ENCODE measurements at regions of chr14 and their contacts with region 1.

Region 1: GRCh38 chr14:70816525-70816924 is 7.2 kb upstream of the MAP3K9 start:
- DNase-seq: no peak
- ATAC-seq: no peak
- H3K4me3 Mint-ChIP-seq: no peak overlapping the region
- H3K27ac Mint-ChIP-seq: no peak overlapping the region
- H3K4me1 Mint-ChIP-seq: peaks cover 26% of the 10 kb centered on the region
- H3K27me3 Mint-ChIP-seq: peaks cover 14% of the 10 kb centered on the region
- CTCF ChIP-seq: no peak

Region 2: DNA sequence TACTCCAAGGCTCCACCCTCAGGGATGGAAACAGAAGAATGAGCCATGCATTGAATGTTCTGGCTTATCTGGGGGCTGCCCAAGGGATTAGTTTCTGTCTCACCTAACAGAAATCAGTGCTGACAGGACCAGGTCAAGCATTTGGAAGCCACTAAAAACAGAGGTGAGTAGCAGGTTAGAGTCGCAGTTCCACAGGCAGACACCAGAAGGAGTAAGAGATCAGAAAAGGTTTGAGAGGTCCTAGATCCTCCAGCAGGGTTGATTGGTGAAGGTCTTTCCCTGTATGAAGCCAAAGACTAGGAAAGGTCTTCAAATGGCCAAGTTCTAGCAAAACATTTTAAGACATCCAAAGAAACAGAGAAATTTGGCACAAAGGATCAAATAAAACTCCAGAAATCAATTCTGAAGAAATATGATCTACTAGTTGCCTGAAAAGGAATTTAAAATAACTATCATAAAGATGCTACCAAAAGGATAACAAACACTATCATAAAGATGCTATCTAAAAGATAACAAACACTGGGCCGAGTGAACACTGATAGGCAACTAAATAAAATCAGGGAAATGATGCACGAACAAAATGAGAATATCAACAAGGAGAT is 194.3 kb before region 1 on chr14:
- CTCF ChIA-PET with region 1: interaction called, 29 read pairs
- POLR2A ChIA-PET with region 1: interaction called, 4 read pairs
- intact Hi-C with region 1: loop called (anchors 1 kb)
- DNase-seq: no peak
- ATAC-seq: peak; percentile 95
- H3K4me3 Mint-ChIP-seq: no peak overlapping the region
- H3K27ac Mint-ChIP-seq: no peak overlapping the region
- H3K4me1 Mint-ChIP-seq: peaks cover 19% of the 10 kb centered on the region
- H3K27me3 Mint-ChIP-seq: no peaks in the 10 kb centered on the region
- CTCF ChIP-seq: peak; percentile 74

Region 3: DNA sequence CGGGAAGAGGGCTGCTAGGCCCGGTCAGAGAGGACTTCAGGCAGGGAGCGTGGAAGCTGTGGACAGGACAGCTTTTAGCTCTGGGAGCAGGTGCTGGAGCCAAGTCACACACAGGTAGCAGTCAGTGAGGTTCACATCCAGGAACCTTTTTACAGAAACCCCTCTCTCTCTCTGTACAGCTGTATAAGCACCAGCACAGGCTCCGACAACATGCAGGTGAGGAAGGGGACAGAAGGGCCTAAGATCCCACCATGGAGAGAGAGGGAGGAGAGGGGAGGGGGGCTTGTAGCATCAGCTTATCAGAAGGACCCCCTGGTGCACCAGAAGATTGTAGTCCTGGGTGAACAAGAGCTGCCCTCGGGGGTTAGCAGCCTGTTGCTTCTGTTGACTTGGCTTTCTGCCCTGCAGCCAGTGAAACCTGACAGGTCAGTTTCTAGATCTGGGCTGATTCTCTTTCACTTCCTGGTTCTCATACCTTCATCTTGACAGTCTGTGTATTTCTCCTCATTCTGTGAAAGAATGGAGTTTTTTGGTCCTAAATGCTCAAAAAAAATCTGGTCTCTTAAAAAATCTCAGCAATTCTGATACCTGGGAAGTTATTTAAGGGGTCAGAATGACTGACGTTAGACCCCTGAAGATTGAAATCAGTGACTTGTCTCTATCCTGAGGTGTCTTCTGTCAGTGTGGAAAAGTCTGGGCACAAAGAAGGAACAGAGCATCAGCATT is 151.2 kb before region 1 on chr14:
- CTCF ChIA-PET with region 1: interaction called, 10 read pairs
- POLR2A ChIA-PET with region 1: no interaction called
- intact Hi-C with region 1: no loop called
- DNase-seq: peak; percentile 40
- ATAC-seq: peak; percentile 62
- H3K4me3 Mint-ChIP-seq: peak overlapping the region; percentile 66
- H3K27ac Mint-ChIP-seq: peak overlapping the region; percentile 93
- H3K4me1 Mint-ChIP-seq: peaks cover 97% of the 10 kb centered on the region
- H3K27me3 Mint-ChIP-seq: no peaks in the 10 kb centered on the region
- CTCF ChIP-seq: no peak

Region 4: GRCh38 chr14:70754989-70755388 is 61.5 kb before region 1 on chr14:
- CTCF ChIA-PET with region 1: interaction called, 4 read pairs
- POLR2A ChIA-PET with region 1: no interaction called
- intact Hi-C with region 1: loop called (anchors 5 kb)
- DNase-seq: no peak
- ATAC-seq: no peak
- H3K4me3 Mint-ChIP-seq: no peak overlapping the region
- H3K27ac Mint-ChIP-seq: no peak overlapping the region
- H3K4me1 Mint-ChIP-seq: no peaks in the 10 kb centered on the region
- H3K27me3 Mint-ChIP-seq: no peaks in the 10 kb centered on the region
- CTCF ChIP-seq: no peak

Region 5: DNA sequence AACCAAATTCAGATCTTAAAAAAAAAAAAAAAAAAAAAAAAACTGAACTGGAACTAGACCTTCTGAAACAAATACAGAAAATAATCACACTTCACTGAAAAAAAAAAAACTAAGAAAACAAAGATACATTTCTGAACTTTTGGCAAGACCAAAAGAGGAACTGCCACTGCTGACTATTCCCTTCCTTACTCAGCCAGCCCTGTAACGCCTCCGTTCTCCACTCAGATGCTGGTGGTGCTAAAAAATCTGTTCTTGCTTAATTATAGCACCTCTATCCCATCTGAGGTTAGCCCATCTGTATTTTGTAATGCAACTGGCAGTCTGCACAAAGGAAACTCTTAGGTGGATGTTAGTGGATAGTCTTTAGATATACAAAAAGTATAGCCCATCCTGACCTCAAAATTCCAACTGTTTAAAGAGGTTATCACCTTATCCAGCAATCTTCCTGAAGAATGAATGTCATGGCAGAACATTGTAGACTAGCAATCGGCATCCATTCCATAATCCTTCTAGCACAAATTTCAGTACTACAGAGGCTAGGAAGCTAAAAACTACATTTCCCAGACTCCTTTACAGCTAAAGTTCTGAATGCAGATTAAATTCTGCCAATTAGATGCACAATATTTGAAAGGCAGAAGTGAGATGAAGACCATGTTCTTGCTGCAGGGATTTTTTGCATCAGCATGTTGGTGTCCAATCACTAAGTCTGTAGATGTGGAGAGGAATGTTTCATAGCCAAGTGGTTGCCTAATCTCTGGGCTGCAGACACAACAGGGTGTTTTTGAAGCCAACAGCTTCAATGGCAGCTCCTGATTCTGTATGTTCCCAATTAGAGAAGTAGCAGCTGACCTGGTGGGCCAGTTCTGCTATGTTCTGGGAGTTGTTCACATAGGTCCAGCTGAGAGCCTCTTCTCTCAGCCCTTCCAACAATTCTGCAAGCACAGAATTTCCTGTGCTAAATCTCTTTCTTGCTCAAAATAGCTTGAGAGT is 12.9 kb before region 1 on chr14:
- CTCF ChIA-PET with region 1: interaction called, 14 read pairs
- POLR2A ChIA-PET with region 1: interaction called, 10 read pairs
- intact Hi-C with region 1: loop called (anchors 1 kb)
- DNase-seq: no peak
- ATAC-seq: peak; percentile 79
- H3K4me3 Mint-ChIP-seq: peak overlapping the region; percentile 35
- H3K27ac Mint-ChIP-seq: peak overlapping the region; percentile 86
- H3K4me1 Mint-ChIP-seq: peaks cover 49% of the 10 kb centered on the region
- H3K27me3 Mint-ChIP-seq: no peaks in the 10 kb centered on the region
- CTCF ChIP-seq: no peak

Region 6: DNA sequence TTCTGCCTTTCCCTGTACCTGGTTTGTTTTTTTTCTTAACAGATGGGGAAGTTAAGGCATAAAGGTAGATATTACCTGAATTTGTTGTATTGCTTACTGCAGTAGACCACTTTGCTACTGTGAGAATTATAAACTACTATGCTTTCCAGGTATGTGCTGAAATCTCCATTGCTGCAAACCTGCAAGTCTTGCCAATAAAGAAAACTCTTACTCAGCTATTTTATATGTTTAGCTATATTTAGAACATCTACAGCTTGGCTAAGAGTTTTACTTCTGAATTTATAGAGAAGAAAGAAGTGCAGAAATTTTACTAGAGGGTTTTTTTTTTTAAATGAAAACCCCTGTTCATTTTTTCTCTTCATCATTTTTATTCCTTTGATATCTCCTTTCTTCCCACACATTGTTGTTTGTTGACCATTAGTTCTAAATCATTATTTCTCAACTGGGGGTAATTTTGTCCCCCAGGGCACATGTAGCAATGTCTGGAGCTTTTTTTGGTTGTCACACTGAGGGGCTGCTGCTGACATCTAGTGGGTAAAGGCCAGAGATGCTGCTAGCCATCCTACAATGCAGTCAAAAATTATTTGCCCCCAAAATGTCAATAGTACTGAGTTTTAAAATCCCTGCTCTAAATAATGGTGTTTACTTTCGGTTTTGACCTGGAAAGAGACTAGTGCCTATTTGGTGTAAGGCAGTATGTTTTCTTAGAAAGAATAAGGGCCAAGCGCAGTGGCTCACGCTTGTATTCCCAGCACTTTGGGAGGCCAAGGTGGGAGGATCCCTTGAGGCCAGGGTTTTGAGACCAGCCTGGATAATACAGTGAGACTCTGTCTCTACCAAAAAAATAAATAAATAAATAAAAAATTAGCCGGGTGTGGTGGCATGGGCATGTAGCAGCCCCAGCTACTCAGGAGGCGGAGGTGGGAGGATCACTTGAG is 139.3 kb after region 1 on chr14:
- CTCF ChIA-PET with region 1: interaction called, 27 read pairs
- POLR2A ChIA-PET with region 1: interaction called, 6 read pairs
- intact Hi-C with region 1: loop called (anchors 1 kb)
- DNase-seq: no peak
- ATAC-seq: peak; percentile 52
- H3K4me3 Mint-ChIP-seq: no peak overlapping the region
- H3K27ac Mint-ChIP-seq: no peak overlapping the region
- H3K4me1 Mint-ChIP-seq: peaks cover 3% of the 10 kb centered on the region
- H3K27me3 Mint-ChIP-seq: no peaks in the 10 kb centered on the region
- CTCF ChIP-seq: no peak

Region 7: GRCh38 chr14:70972107-70972976 is 155.8 kb after region 1 on chr14:
- CTCF ChIA-PET with region 1: interaction called, 39 read pairs
- POLR2A ChIA-PET with region 1: interaction called, 4 read pairs
- intact Hi-C with region 1: loop called (anchors 1 kb)
- DNase-seq: peak; percentile 49
- ATAC-seq: peak; percentile 62
- H3K4me3 Mint-ChIP-seq: no peak overlapping the region
- H3K27ac Mint-ChIP-seq: no peak overlapping the region
- H3K4me1 Mint-ChIP-seq: peaks cover 5% of the 10 kb centered on the region
- H3K27me3 Mint-ChIP-seq: no peaks in the 10 kb centered on the region
- CTCF ChIP-seq: peak; percentile 59

Measured in activated B cell treated with CpG ODN at 0.5 μM for 24 hours (primary cell).